ENCODE measurements at regions of chr1 and their contacts with region 1.

Region 1: DNA sequence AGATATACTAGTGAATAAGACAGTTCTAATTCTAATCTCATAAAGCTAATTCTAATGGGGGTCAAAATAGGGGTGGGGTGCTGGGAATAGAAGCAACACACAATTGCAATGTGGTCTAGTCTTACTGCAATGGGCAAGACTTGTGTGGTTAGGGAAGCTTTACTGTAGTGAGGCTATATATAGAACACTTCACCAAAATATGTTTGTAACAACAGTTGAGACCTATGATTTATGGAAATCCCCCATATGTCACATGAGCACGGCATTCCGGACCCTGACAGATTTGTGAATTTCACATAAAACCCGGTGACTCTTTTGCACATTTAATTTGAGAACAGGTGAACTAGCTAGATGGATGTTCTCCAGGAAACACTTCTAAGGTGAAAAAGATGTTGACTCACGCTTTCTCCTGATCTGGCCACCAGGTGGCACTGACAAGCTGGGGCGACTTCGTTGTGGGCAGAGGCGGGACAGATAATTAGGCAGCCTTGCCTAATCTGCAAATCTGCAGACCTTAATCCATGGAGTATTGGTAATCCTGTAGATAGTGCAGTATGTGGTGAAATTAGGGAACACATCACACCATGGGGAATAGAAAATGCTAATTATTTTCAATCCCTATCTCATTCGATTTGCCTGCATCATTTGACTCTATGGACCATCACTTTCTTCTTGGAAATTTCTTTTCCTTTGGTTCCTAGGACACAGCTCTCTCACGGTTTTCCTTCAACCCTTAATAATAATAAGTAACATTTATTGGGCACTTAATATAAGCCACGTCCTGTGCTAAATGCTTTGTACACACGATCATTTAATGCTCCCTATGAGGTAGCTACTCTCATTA is 37.7 kb downstream of the KIAA0040 start:
- DNase-seq: peak; percentile 82
- H3K4me3 ChIP-seq: no peak overlapping the region
- H3K27ac ChIP-seq: peak overlapping the region; percentile 22
- H3K4me1 ChIP-seq: peaks cover 29% of the 10 kb centered on the region
- CTCF ChIP-seq: peak; percentile 99

Region 2: DNA sequence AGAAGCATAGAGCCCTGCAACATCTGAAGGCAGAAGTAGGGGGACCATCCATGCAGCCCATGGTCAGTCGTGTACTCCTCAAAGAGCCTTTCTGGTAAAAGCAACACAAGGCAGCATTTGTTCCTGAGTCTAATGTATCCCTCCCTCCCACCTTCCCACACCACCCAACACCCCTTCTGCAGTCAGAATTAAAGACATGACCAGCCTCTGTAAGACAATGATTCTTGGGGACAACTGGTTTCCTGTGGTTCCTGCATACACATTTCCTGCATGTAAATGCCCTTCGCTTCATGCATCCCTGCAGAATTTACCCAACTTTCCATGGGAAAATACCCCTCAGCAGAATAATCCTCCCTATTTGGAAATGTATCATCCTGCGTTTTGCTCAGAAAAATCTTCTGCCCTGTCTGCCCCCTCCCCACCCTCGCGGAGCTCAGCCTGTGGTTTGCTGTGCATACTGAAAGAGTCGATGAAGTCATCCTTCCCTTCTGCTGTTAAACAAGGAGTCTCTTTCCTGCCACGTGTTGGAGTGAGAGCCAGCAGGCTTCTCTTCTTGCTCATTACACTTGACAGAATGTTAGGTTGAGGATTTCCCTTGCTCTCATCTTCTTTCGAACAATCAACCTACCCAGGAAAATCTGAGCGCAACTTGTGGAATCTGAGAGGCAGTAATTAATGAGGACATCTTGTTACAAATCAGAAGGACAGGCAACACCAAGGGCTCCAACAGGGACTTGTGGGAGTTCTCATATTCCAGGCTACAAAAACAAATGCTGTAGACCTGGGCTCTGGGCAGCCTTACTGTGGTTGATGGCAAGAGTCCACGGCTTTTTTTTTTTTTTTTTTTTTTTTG is 82.5 kb before region 1 on chr1:
- CTCF ChIA-PET with region 1: no interaction called
- POLR2A ChIA-PET with region 1: no interaction called
- intact Hi-C with region 1: no loop called
- DNase-seq: no peak
- H3K4me3 ChIP-seq: no peak overlapping the region
- H3K27ac ChIP-seq: no peak overlapping the region
- H3K4me1 ChIP-seq: no peaks in the 10 kb centered on the region
- CTCF ChIP-seq: no peak

Region 3: DNA sequence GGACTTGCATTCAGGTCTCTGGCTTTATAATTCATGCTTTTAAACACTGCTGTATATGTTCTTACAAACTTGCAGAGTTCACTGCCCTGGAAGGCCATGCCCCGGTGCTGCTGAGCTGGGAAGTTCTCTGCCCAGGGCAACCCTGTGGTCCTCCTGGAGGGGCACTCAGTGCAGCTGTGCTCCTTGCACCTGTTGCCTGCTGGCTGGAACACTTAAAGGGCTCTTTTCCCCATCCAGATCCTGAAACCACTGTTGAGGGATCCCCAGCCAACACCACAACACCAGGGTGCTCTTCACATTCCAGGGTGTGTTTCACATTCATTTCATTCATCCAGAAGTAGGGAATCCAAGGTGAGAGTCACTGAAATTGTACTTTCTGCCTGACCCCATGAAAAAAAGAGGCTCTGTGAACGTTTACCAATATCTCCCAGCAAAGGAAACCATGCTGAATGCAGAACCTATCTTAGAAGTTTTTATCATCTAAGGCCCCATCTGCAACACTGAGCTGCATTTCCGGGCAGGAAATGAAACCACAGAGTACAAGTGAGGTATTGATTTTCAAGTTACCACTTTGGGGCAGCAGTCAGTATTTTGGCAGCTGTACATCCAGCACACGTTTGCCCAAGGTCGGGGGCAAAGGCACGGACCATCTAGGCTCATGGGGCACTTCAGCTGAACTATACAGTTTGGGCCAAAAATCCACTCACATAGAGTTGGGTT is 54.1 kb after region 1 on chr1:
- CTCF ChIA-PET with region 1: interaction called, 6 read pairs
- POLR2A ChIA-PET with region 1: no interaction called
- intact Hi-C with region 1: loop called (anchors 5 kb)
- DNase-seq: peak; percentile 91
- H3K4me3 ChIP-seq: peak overlapping the region; percentile 50
- H3K27ac ChIP-seq: peak overlapping the region; percentile 97
- H3K4me1 ChIP-seq: peaks cover 69% of the 10 kb centered on the region
- CTCF ChIP-seq: peak; percentile 49

Region 4: DNA sequence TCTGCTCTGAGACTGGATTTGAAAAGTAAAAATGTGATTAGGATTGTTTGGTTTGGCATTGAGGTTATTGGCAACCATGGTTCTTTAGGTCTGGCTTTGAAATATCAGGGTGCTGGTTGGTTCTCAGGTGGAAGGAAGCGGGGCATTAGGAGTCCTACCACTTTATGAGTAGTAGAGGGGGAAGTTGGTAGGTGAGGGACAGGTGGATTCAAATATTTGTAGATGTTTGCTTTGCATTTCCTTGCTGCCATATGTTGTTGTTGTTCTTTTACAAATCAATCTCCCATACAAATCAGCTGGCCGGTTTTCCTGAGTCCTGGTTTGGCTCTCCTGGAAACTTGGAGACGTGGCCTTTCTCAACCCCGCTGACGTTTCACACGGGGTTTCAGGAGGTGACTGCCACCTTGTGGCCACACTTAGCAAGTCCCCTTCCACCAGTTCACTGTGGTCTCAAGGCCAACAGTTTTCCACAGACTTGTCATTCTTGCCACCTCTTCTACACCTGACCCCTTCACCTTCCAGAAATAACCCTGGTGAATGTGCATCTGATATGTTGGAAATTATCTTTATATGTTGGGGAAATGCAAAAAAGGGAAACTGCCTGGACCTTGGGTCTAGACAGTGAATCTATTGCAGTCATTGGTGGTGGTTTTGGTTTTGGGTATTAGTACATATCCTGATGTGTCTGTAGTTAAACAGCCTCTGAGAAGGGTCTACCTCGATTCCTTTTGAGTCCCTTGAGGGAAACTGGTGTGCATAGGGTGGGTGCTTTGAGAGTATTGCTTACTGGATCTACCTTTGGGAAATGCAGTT is 164.8 kb after region 1 on chr1:
- CTCF ChIA-PET with region 1: interaction called, 30 read pairs
- POLR2A ChIA-PET with region 1: interaction called, 27 read pairs
- intact Hi-C with region 1: loop called (anchors 1 kb)
- DNase-seq: peak; percentile 86
- H3K4me3 ChIP-seq: no peak overlapping the region
- H3K27ac ChIP-seq: no peak overlapping the region
- H3K4me1 ChIP-seq: peaks cover 37% of the 10 kb centered on the region
- CTCF ChIP-seq: peak; percentile 99

Region 5: GRCh38 chr1:175373786-175374623 is 219.2 kb after region 1 on chr1:
- CTCF ChIA-PET with region 1: interaction called, 9 read pairs
- POLR2A ChIA-PET with region 1: no interaction called
- intact Hi-C with region 1: loop called (anchors 2 kb)
- DNase-seq: peak; percentile 57
- H3K4me3 ChIP-seq: no peak overlapping the region
- H3K27ac ChIP-seq: no peak overlapping the region
- H3K4me1 ChIP-seq: no peaks in the 10 kb centered on the region
- CTCF ChIP-seq: peak; percentile 89

Region 6: DNA sequence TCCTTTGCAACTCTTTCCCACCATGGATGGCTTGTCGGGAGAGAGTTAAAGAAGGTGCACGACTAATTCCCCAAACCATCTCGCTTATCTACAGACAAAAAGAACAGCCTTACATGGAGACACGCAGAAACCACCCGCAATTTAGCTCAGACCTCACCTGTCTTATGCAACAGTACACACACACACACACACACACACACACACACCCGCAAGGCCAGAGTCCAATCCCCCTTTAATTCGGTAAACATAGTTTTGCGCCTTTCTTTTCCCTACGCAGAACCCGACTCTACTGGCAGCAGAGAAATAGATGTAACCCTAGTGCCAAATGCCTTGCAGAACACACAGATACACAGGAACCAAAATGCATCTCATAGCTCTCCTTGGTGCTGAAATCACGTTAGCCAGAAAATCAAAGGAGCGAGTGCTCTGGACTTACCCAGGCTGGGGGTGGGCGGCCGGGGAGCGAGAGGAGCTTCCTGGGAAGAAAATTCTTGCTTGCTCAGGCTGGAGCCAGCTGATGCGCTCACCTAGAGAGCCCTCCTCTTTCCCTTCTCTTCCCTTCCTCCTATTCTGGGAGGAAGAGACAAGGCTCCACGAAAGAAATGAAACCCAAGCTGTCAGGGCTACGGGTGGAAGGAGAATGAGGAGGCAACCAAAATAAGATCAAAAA is 588.1 kb after region 1 on chr1:
- CTCF ChIA-PET with region 1: no interaction called
- POLR2A ChIA-PET with region 1: no interaction called
- intact Hi-C with region 1: loop called (anchors 10 kb)
- DNase-seq: no peak
- H3K4me3 ChIP-seq: no peak overlapping the region
- H3K27ac ChIP-seq: no peak overlapping the region
- H3K4me1 ChIP-seq: no peaks in the 10 kb centered on the region
- CTCF ChIP-seq: no peak